ENCODE measurements at regions of chr13 and their contacts with region 1.

Region 1: GRCh38 chr13:100588331-100589177 is at the start of gene GGACT:
- H3K4me3 ChIP-seq: peak within 1 kb of the TSS; percentile 51
- H3K27ac ChIP-seq: peak within 1 kb of the TSS; percentile 57; the same call in 1 of the 2 replicates
- H3K4me1 ChIP-seq: no peaks in the 10 kb centered on the region
- CTCF ChIP-seq: no peak

Region 2: DNA sequence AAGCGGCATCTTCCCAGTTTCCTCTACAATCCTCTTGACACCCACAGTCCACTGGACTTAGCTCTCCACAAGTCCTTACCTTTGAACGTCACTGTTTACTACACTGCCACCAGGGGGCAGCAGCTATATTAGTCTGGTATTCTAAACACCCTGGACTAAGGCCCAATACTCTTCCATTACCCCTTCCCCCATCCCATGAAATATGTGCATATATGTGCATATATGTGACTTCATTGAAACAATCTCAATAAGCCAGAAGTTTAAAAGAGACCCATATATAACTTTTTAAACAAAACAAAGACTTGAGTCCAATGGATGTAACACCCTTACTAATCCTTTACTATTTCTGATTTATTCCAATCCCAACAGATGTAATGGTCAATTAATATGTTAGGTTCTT is 15.4 kb before region 1 on chr13:
- CTCF ChIA-PET with region 1: interaction called, 10 read pairs
- POLR2A ChIA-PET with region 1: no interaction called
- H3K4me3 ChIP-seq: no peak overlapping the region
- H3K27ac ChIP-seq: no peak overlapping the region
- H3K4me1 ChIP-seq: no peaks in the 10 kb centered on the region
- CTCF ChIP-seq: no peak

Region 3: GRCh38 chr13:100600915-100601314 is 12.4 kb after region 1 on chr13:
- CTCF ChIA-PET with region 1: interaction called, 13 read pairs
- POLR2A ChIA-PET with region 1: no interaction called
- H3K4me3 ChIP-seq: no peak overlapping the region
- H3K27ac ChIP-seq: no peak overlapping the region
- H3K4me1 ChIP-seq: no peaks in the 10 kb centered on the region
- CTCF ChIP-seq: no peak

Region 4: DNA sequence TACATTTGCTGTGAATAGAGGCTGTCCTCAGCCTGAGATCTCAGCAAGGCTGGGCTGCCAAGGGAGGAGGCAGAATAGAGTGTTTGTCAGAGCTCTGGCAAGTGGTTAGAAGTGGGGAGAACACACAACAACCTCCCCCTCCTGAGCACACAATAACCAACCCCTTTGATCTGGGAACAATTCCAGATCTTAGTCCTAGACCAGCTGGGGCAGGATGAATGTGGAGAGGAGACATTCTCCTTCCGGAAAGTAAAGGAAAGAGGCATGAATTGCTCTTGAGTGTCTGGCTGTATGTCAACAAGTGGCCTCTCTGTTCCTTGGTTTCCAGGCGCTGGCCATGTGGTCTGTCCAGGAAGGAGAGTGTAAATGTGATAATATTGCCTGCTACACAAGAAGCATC is 200.9 kb after region 1 on chr13:
- CTCF ChIA-PET with region 1: no interaction called
- POLR2A ChIA-PET with region 1: no interaction called
- H3K4me3 ChIP-seq: no peak overlapping the region
- H3K27ac ChIP-seq: no peak overlapping the region
- H3K4me1 ChIP-seq: no peaks in the 10 kb centered on the region
- CTCF ChIP-seq: no peak

Measured in HEK293 (cell line).